OCI-LY7 (cell line): ENCODE measurements at regions of chr19 and their contacts with region 1.

Region 1: GRCh38 chr19:12681074-12681951 is at the start of gene DHPS:
- DNase-seq: peak; percentile 99
- H3K4me3 ChIP-seq: peak within 1 kb of the TSS; percentile 84
- H3K27ac ChIP-seq: peak within 1 kb of the TSS; percentile 94
- H3K4me1 ChIP-seq: peaks cover 11% of the 10 kb centered on the region
- CTCF ChIP-seq: 0 out of 2 replicates have a peak, but pooled peaks have one; percentile 24
- total RNA-seq, gene DHPS: 91.2 and 102 TPM in 2 replicates

Region 2: DNA sequence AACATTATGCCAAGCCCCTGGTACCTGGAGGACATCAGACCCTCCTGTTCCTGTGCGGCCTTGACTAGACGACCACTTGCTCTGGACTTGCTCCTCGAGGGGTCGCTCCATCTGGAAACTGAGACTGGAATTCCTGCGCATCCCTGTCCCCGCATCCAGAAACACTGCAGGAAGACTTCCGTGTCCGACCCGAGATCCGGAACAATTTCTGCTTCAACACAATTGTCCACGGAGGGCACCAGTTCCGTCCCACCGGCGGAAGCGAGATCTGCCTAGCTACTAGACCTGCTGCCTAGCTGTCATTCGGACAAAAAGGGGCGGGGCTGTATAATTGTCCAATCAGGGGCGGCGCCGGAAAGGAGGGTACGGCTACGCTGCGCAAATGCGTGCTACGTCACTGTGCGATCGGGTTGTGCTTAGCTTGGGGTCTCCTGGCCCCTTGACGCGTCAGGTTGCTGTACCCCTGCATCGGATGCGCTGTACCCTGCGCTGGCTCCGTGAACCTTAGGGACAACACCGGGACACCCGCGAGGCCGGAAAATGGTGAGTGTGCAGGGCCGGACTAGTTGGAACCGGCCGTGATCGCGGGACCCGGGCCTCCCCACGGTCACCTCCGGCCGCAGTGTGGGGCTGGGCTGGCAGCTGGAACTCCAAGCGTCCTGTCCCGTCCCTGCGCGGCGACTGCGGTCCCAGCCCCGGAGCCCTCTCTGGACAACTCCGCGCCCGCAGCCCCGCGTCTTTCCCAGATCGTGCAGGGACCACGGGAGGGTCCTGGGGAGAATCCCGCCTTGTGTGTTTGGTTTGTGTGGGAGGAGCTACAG is 70.6 kb before region 1 on chr19 and contains the starts of genes ZNF490 and ZNF791:
- CTCF ChIA-PET with region 1: no interaction called
- POLR2A ChIA-PET with region 1: interaction called, 7 read pairs
- intact Hi-C with region 1: loop called (anchors 1 kb)
- DNase-seq: peak; percentile 98
- H3K4me3 ChIP-seq: peak within 1 kb of the TSS; percentile 90
- H3K27ac ChIP-seq: no peak within 1 kb of the TSS
- H3K4me1 ChIP-seq: peaks cover 37% of the 10 kb centered on the region
- CTCF ChIP-seq: peak; percentile 43; the same call in 1 of the 2 replicates
- total RNA-seq, gene ZNF490: 6.3 and 8.6 TPM in 2 replicates
- total RNA-seq, gene ZNF791: 5.3 and 7.8 TPM in 2 replicates

Region 3: DNA sequence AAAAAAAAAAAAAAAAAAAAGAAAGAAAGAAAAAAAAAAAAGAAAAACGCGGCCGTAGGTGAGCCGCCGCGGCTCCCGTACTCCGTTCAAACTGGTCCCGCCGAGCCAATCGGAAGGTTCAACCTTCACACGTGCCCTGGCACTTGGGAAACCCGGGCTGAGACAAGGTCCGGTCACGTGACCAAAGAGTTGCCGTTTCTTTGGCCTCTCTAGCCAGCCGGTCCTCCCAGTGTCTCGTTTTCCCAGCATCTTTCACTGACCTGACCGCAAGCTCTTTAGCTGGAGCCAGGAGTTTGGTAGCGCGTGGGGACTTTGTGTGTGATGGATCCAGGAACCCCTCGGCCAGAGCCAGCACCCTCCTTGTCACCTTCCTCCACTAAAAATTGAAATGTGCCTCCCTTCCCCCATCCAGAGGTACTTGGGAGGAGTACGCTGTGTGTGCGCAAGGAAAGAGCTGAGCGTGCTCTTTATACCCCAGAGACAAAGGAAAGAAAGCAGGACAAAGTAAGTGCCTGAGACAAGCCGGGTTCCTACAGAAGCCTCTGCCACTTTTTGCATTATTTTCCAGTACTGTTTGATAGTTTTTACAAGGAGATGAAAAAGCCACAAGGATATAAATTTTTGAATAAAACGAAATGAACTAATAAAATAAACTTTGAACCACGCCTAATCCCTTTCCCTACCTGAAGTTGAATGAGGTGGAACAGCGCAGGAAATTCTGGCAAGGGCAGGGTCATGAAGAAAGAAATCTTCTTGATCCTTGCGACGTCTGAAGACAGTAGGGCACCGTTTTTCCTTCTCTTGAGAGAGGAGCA is 41.5 kb after region 1 on chr19:
- CTCF ChIA-PET with region 1: no interaction called
- POLR2A ChIA-PET with region 1: no interaction called
- intact Hi-C with region 1: loop called (anchors 1 kb)
- DNase-seq: peak; percentile 100
- H3K4me3 ChIP-seq: peak overlapping the region; percentile 82
- H3K27ac ChIP-seq: peak overlapping the region; percentile 74
- H3K4me1 ChIP-seq: peaks cover 26% of the 10 kb centered on the region
- CTCF ChIP-seq: no peak

Region 4: GRCh38 chr19:12745166-12745897 is 64.0 kb after region 1 on chr19:
- CTCF ChIA-PET with region 1: no interaction called
- POLR2A ChIA-PET with region 1: no interaction called
- intact Hi-C with region 1: no loop called
- DNase-seq: no peak
- H3K4me3 ChIP-seq: no peak overlapping the region
- H3K27ac ChIP-seq: no peak overlapping the region
- H3K4me1 ChIP-seq: no peaks in the 10 kb centered on the region
- CTCF ChIP-seq: no peak

Region 5: DNA sequence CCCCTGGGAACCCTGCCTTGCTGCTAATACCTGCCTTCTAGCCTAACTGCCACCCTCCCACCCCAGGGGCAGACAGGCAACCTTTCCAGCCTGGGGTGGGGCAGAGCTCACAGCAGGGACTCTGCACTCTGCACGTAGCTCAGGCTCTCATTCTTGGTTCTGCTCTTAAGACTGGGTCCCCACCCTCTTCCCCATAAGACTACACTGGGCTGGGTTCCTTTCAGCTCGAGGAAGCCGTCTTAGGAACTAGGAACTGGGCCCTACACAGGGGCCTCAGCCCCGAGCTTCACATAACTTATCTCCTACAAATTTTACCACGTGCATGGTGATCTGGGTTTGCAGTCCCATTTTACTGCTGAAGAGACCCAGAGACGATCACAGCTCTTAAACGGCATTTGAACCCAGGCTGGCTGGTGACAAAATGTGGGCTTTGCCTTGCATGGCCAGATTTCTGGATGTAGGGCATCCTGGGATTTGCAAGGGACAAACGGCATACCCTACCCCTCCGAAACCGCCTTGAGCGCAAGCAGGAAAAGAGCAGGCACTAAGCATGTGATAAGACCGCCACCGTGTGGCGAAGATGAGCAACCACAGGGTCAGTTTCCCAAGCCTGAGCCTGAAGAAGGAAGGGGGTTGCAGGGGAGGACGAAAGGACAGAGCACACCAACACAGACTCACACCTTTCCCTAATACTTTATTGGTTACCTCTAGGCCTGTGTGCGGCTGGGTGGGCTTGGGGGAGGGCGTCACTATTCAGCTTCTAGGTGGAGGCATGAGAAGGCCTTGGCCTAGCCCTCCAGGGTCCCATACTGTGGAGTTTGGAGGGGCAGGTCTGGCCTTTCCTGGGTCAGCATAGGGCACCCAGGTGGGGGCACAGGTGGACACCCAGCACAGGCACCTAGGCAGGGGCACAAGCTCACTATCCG is 115.1 kb after region 1 on chr19:
- CTCF ChIA-PET with region 1: no interaction called
- POLR2A ChIA-PET with region 1: no interaction called
- intact Hi-C with region 1: loop called (anchors 2 kb)
- DNase-seq: peak; percentile 86
- H3K4me3 ChIP-seq: no peak overlapping the region
- H3K27ac ChIP-seq: no peak overlapping the region
- H3K4me1 ChIP-seq: peaks cover 26% of the 10 kb centered on the region
- CTCF ChIP-seq: peak; percentile 93

Region 6: GRCh38 chr19:12881172-12881808 is 200.0 kb after region 1 on chr19 and contains the start of gene DNASE2:
- CTCF ChIA-PET with region 1: no interaction called
- POLR2A ChIA-PET with region 1: no interaction called
- intact Hi-C with region 1: no loop called
- DNase-seq: peak; percentile 99
- H3K4me3 ChIP-seq: peak within 1 kb of the TSS; percentile 87
- H3K27ac ChIP-seq: peak within 1 kb of the TSS; percentile 76
- H3K4me1 ChIP-seq: peaks cover 26% of the 10 kb centered on the region
- CTCF ChIP-seq: no peak
- total RNA-seq, gene DNASE2: 28.3 and 32.4 TPM in 2 replicates